ENCODE measurements at regions of chr10 and their contacts with region 1.

Region 1: DNA sequence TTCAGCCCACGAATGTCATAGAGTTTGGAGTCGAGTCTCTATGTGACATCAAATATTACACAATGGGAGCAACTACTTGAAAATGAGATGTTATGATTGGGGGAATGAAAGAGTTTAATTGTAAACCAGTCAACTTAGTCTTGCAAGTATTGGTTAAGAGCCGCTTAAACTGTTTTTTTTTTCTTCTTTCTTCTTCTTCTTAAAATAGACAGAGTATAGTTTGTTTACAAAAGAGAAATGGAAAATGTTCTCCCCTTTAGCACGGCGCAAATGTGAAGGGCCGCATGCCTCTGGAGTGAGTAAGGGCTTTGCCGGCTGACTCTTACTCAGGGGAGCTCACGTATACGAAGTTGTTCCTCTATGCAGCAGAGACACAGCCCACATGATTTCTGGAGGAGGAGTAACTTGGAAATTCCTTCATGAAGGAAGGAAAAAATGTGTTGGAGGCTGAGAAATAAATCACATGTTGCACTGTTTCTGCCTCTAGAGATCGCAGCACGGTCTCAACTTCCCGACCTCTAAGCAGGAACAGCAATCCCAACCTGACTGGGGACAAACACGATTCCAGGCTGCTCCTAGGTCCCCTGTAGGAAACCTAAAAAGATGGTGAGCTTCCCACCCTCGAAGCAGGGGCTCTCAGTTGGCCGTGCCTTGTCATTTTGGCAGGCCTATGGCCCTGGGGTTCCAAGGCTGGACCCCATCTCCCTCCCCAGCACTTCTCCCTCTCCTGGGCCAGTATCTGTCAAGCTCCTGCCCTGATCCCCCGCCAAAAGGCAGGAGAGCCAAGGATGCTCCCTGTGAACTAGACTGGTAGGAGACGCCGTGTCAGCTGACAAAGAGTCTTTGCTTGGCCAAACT is 44.8 kb downstream of the MYOF start:
- DNase-seq: peak; percentile 84 to 88
- H3K4me3 ChIP-seq: no peak overlapping the region
- H3K4me3 Mint-ChIP-seq: peak overlapping the region; percentile 60
- H3K27ac Mint-ChIP-seq: peak overlapping the region; percentile 96
- H3K4me1 ChIP-seq: peaks cover 73% of the 10 kb centered on the region
- H3K4me1 Mint-ChIP-seq: peaks cover 75% of the 10 kb centered on the region
- H3K27me3 ChIP-seq: no peaks in the 10 kb centered on the region
- H3K27me3 Mint-ChIP-seq: no peaks in the 10 kb centered on the region
- CTCF ChIP-seq: no peak

Region 2: GRCh38 chr10:93376372-93377293 is 60.7 kb before region 1 on chr10:
- CTCF ChIA-PET with region 1: no interaction called
- POLR2A ChIA-PET with region 1: no interaction called
- intact Hi-C with region 1: no loop called
- DNase-seq: peak; percentile 56 to 80
- H3K4me3 ChIP-seq: no peak overlapping the region
- H3K4me3 Mint-ChIP-seq: no peak overlapping the region
- H3K27ac Mint-ChIP-seq: peak overlapping the region; percentile 60
- H3K4me1 ChIP-seq: 0 out of 2 replicates have a peak, but pooled peaks cover 13% of the 10 kb centered on the region
- H3K4me1 Mint-ChIP-seq: peaks cover 27% of the 10 kb centered on the region
- H3K27me3 ChIP-seq: no peaks in the 10 kb centered on the region
- H3K27me3 Mint-ChIP-seq: no peaks in the 10 kb centered on the region
- CTCF ChIP-seq: peak; percentile 89 to 91

Region 3: GRCh38 chr10:93386631-93387369 is 50.5 kb before region 1 on chr10:
- CTCF ChIA-PET with region 1: no interaction called
- POLR2A ChIA-PET with region 1: no interaction called
- intact Hi-C with region 1: no loop called
- DNase-seq: no peak
- H3K4me3 ChIP-seq: no peak overlapping the region
- H3K4me3 Mint-ChIP-seq: no peak overlapping the region
- H3K27ac Mint-ChIP-seq: no peak overlapping the region
- H3K4me1 ChIP-seq: no peaks in the 10 kb centered on the region
- H3K4me1 Mint-ChIP-seq: no peaks in the 10 kb centered on the region
- H3K27me3 ChIP-seq: no peaks in the 10 kb centered on the region
- H3K27me3 Mint-ChIP-seq: no peaks in the 10 kb centered on the region
- CTCF ChIP-seq: no peak

Region 4: GRCh38 chr10:93417921-93418320 is 19.4 kb before region 1 on chr10:
- CTCF ChIA-PET with region 1: interaction called, 3 read pairs
- POLR2A ChIA-PET with region 1: no interaction called
- intact Hi-C with region 1: loop called (anchors 1 kb)
- DNase-seq: peak; percentile 84 to 85
- H3K4me3 ChIP-seq: no peak overlapping the region
- H3K4me3 Mint-ChIP-seq: peak overlapping the region; percentile 62
- H3K27ac Mint-ChIP-seq: peak overlapping the region; percentile 99
- H3K4me1 ChIP-seq: peaks cover 65% of the 10 kb centered on the region
- H3K4me1 Mint-ChIP-seq: peaks cover 55% of the 10 kb centered on the region
- H3K27me3 ChIP-seq: no peaks in the 10 kb centered on the region
- H3K27me3 Mint-ChIP-seq: no peaks in the 10 kb centered on the region
- CTCF ChIP-seq: no peak

Region 5: GRCh38 chr10:93471110-93471651 is 33.9 kb after region 1 on chr10:
- CTCF ChIA-PET with region 1: interaction called, 7 read pairs
- POLR2A ChIA-PET with region 1: interaction called, 15 read pairs
- intact Hi-C with region 1: loop called (anchors 1 kb)
- DNase-seq: peak; percentile 61 to 72
- H3K4me3 ChIP-seq: no peak overlapping the region
- H3K4me3 Mint-ChIP-seq: peak overlapping the region; percentile 37
- H3K27ac Mint-ChIP-seq: peak overlapping the region; percentile 95
- H3K4me1 ChIP-seq: peaks cover 88% of the 10 kb centered on the region
- H3K4me1 Mint-ChIP-seq: peaks cover 51% of the 10 kb centered on the region
- H3K27me3 ChIP-seq: no peaks in the 10 kb centered on the region
- H3K27me3 Mint-ChIP-seq: no peaks in the 10 kb centered on the region
- CTCF ChIP-seq: no peak

Measured in Caco-2 (cell line).